ENCODE measurements at regions of chr1 and their contacts with region 1.

Region 1: GRCh38 chr1:183942933-183943693 is 94.4 kb downstream of the COLGALT2 start:
- DNase-seq: peak in 1 of 2 donors; percentile 60
- ATAC-seq: peak; percentile 73 to 94 (median 89)
- H3K4me3 ChIP-seq: no peak overlapping the region
- H3K27ac ChIP-seq: peak overlapping the region; percentile 66
- H3K4me1 ChIP-seq: peaks cover 17% of the 10 kb centered on the region
- H3K27me3 ChIP-seq: no peaks in the 10 kb centered on the region
- CTCF ChIP-seq: no peak

Region 2: GRCh38 chr1:184075055-184076029 is 132.2 kb after region 1 on chr1:
- intact Hi-C with region 1: no loop called
- DNase-seq: no peak
- ATAC-seq: peak; percentile 67 to 93 (median 77)
- H3K4me3 ChIP-seq: no peak overlapping the region
- H3K27ac ChIP-seq: peak overlapping the region; percentile 13
- H3K4me1 ChIP-seq: peaks cover 7% of the 10 kb centered on the region
- H3K27me3 ChIP-seq: no peaks in the 10 kb centered on the region
- CTCF ChIP-seq: peak; percentile 82

Region 3: GRCh38 chr1:184163674-184164465 is 220.8 kb after region 1 on chr1:
- intact Hi-C with region 1: no loop called
- DNase-seq: peak in 1 of 2 donors; percentile 29
- ATAC-seq: peak in 3 of 4 donors; percentile 46 to 77 (median 64)
- H3K4me3 ChIP-seq: no peak overlapping the region
- H3K27ac ChIP-seq: no peak overlapping the region
- H3K4me1 ChIP-seq: no peaks in the 10 kb centered on the region
- H3K27me3 ChIP-seq: no peaks in the 10 kb centered on the region
- CTCF ChIP-seq: no peak

Region 4: DNA sequence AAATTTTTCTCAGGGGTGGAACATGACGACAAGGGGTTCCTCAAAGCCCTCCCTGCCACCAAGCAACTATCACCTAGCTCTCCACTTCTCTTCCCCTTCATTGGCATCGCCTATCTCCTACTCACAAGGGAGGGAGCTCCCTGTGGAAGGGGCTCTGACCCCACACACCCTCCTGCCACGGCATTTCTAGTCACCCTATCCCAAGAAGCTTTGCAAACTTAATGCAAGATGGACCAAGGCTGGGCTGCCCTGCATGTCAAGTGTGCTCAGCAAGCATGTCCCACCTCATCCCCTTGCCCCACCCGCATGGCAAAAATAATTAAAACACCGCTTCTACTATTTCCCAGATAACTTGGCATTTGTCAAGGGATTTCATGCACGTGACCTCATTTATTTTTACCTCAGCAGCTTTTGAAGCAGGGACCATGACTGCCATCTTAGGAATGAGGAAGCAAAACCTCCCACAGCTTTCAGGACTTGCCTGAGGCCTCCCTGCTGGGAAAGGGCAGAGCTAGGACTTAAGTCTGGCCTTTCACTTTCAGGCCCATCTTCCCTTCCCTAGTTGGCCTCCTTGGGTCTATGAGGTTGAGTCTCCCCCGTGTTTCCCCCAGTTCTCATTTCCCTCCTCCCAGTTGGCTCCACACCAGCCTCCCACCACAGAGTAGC is 269.7 kb after region 1 on chr1:
- intact Hi-C with region 1: loop called in 1 of 2 experiments (anchors 10 kb)
- DNase-seq: no peak
- ATAC-seq: no peak
- H3K4me3 ChIP-seq: no peak overlapping the region
- H3K27ac ChIP-seq: no peak overlapping the region
- H3K4me1 ChIP-seq: no peaks in the 10 kb centered on the region
- H3K27me3 ChIP-seq: no peaks in the 10 kb centered on the region
- CTCF ChIP-seq: no peak

Region 5: DNA sequence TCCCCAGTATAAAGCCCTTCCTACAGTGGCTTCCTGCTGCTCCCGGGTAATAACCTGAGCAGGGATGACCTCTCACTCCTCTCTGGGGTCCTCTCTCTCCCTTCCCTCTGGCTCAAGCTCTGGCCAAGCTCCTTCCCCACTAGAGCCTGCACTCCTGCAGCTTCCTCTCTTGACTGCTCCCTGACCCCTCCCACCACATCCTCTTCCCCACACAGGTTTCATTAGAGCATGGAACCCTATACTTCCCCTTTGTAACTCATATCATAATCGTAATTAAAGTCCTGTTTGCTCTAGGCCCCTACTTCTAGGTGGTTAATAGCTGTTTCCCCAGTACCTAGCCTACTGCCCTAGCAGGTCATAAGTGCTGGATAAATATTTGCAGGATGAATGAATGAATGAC is 589.9 kb after region 1 on chr1:
- intact Hi-C with region 1: no loop called
- DNase-seq: no peak
- ATAC-seq: peak in 1 of 4 donors; percentile 10
- H3K4me3 ChIP-seq: no peak overlapping the region
- H3K27ac ChIP-seq: peak overlapping the region; percentile 9
- H3K4me1 ChIP-seq: peaks cover 41% of the 10 kb centered on the region
- H3K27me3 ChIP-seq: no peaks in the 10 kb centered on the region
- CTCF ChIP-seq: no peak